Activated CD8-positive, alpha-beta T cell treated with anti-CD3 and anti-CD28 coated beads for 36 hours (primary cell): ENCODE measurements at regions of chr1 and their contacts with region 1.

Region 1: GRCh38 chr1:145978854-145979759 is 14.6 kb downstream of the POLR3GL start:
- DNase-seq: peak; percentile 95
- ATAC-seq: peak; percentile 86
- H3K4me3 Mint-ChIP-seq: no peak overlapping the region
- H3K27ac Mint-ChIP-seq: no peak overlapping the region
- H3K4me1 Mint-ChIP-seq: peaks cover 41% of the 10 kb centered on the region
- H3K27me3 Mint-ChIP-seq: no peaks in the 10 kb centered on the region
- CTCF ChIP-seq: no peak

Region 2: GRCh38 chr1:145891587-145892485 is 87.3 kb before region 1 on chr1:
- CTCF ChIA-PET with region 1: interaction called, 11 read pairs
- POLR2A ChIA-PET with region 1: no interaction called
- intact Hi-C with region 1: no loop called
- DNase-seq: peak; percentile 77
- ATAC-seq: peak; percentile 84
- H3K4me3 Mint-ChIP-seq: no peak overlapping the region
- H3K27ac Mint-ChIP-seq: no peak overlapping the region
- H3K4me1 Mint-ChIP-seq: peaks cover under 1% of the 10 kb centered on the region
- H3K27me3 Mint-ChIP-seq: peaks cover under 1% of the 10 kb centered on the region
- CTCF ChIP-seq: peak; percentile 86

Region 3: GRCh38 chr1:145963995-145964901 is 14.9 kb before region 1 on chr1 and contains the starts of genes ANKRD34A and POLR3GL:
- CTCF ChIA-PET with region 1: interaction called, 93 read pairs
- POLR2A ChIA-PET with region 1: interaction called, 20 read pairs
- intact Hi-C with region 1: no loop called
- DNase-seq: peak; percentile 98
- ATAC-seq: peak; percentile 88
- H3K4me3 Mint-ChIP-seq: peak within 1 kb of the TSS; percentile 92
- H3K27ac Mint-ChIP-seq: peak within 1 kb of the TSS; percentile 91
- H3K4me1 Mint-ChIP-seq: peaks cover 30% of the 10 kb centered on the region
- H3K27me3 Mint-ChIP-seq: no peaks in the 10 kb centered on the region
- CTCF ChIP-seq: no peak
- total RNA-seq, gene ANKRD34A: 6.6 to 7.7 TPM
- total RNA-seq, gene POLR3GL: 22.3 to 23.3 TPM

Region 4: DNA sequence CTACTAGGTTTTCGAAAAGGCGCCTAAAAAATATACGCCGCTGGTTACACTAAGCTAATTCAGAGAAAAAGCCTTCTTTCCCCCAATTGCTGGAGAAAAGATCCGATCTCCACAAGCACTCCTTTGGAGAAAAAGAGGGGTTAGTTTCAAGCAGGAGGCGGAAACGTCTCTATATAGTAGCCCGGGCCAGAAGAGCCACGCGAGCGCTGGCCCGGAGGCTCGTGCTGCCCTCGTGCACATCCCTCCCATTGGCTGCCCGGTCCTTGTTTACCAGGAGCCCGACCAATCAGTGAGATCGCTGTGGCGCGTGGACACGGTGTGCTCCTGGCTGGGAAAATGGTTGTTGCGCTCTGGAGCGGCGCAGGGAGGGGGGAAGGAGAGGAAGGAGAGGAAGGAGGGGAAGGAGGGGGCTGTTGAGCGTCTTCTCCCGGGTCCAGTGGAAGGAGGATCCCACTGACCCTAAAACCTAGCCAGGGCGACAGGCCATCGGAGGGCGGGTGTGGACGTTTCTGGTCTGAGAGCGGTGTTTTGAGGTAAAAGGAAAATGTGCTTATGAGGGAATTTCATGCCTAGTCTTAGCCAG is 17.4 kb after region 1 on chr1 and contains the start of gene TXNIP:
- CTCF ChIA-PET with region 1: interaction called, 247 read pairs
- POLR2A ChIA-PET with region 1: interaction called, 446 read pairs
- intact Hi-C with region 1: loop called (anchors 2 kb)
- DNase-seq: peak; percentile 98
- ATAC-seq: peak; percentile 79
- H3K4me3 Mint-ChIP-seq: peak within 1 kb of the TSS; percentile 98
- H3K27ac Mint-ChIP-seq: peak within 1 kb of the TSS; percentile 100
- H3K4me1 Mint-ChIP-seq: peaks cover 61% of the 10 kb centered on the region
- H3K27me3 Mint-ChIP-seq: no peaks in the 10 kb centered on the region
- CTCF ChIP-seq: no peak
- total RNA-seq, gene TXNIP: 130 to 134 TPM

Region 5: DNA sequence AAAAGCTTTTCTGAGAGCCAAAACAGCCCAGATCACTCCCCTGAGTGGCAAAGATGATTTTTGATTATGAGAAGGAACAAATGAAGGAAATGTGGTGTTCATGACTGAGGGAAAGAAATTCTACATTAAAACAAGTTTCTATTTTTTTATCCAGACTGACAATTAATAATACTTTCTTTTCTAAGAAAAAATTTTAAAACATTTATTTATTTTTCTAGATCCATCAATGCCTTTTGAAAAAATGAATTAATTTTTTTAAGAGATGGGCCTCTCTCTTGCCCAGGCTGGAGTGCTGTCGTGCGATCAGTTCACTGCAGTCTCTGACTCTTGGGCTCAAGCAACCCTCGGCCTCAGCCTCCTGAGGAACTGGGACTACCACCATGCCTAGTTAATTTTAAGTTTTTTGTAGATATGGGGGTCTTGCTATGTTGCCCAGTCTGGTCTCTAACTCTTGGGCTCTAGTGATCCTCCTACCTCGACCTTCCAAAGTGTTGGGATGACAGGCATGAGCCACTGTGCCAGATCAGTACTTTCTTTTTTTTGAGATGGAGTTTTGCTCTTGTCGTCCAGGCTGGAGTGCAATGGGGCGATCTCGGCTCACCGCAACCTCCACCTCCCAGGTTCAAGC is 28.5 kb after region 1 on chr1:
- CTCF ChIA-PET with region 1: interaction called, 247 read pairs
- POLR2A ChIA-PET with region 1: interaction called, 39 read pairs
- intact Hi-C with region 1: loop called (anchors 1 kb)
- DNase-seq: no peak
- ATAC-seq: no peak
- H3K4me3 Mint-ChIP-seq: peak overlapping the region; percentile 50
- H3K27ac Mint-ChIP-seq: peak overlapping the region; percentile 87
- H3K4me1 Mint-ChIP-seq: peaks cover 41% of the 10 kb centered on the region
- H3K27me3 Mint-ChIP-seq: no peaks in the 10 kb centered on the region
- CTCF ChIP-seq: no peak

Region 6: DNA sequence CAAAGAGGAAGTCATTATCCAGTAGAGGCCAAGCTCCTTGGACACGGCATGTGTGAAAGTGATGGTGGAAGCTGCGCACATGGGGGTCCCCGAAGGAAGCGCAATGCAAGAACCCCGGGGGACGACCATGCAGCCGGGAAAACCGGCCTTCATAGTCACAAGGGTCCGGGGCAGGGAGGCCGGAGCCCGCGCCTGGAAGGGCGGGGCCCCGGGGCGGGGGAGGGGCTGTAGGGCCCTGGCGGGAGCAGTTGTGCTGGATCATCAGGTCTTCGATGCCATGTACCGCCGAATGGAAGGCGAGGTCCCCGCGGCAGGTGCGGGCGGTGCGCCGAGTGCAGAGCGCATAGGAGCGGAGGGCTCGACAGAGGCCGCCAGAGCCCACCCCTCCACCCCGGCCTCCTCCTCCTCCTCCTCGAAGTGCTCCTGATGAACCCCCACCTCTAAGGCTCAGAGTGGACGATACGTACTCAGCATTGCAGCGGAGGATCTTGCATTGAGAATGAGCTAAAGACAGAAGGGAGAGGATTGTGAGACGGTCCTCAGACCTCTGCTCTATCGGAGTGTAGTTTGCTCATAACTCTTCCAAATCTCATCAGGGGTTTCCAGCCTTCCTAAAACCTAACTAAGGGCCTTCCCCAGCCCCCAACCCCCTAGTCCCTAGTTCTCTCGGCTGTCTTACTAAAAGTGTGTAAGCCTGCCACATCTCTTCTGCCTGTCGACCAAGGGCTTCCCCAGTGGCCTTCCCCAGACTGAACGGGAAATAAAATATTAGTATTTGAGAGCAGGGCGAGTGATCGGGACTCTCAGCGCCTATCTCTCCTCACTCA is 40.3 kb after region 1 on chr1:
- CTCF ChIA-PET with region 1: interaction called, 17 read pairs
- POLR2A ChIA-PET with region 1: interaction called, 3 read pairs
- intact Hi-C with region 1: no loop called
- DNase-seq: no peak
- ATAC-seq: peak; percentile 39
- H3K4me3 Mint-ChIP-seq: peak overlapping the region; percentile 22
- H3K27ac Mint-ChIP-seq: no peak overlapping the region
- H3K4me1 Mint-ChIP-seq: peaks cover 7% of the 10 kb centered on the region
- H3K27me3 Mint-ChIP-seq: peaks cover 37% of the 10 kb centered on the region
- CTCF ChIP-seq: no peak